Caco-2 (cell line): ENCODE measurements at regions of chr5 and their contacts with region 1.

Region 1: DNA sequence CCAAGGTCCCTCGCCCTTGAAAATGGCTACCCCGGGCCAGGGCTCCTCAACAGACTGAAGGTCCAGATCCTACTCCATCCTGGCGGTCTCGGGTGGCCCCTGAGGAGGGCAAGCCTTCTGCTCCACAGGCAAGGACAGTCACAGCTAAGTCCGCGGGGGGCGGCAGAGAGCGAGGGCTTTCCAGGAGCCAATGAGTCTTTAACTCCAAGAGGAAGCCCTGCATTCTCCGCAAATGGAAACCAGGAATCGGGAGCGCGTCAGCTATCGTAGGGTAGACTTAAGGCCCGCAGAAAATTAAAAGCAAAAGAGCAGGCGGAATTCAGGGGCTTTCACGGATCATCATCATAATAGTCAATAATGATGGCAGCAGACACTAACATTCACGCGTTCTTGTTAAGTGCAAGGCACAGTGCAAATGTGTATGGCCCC is 87.8 kb upstream of the TNFAIP8 start:
- DNase-seq: peak; percentile 91 to 92
- H3K4me3 ChIP-seq: peak overlapping the region; percentile 68
- H3K4me3 Mint-ChIP-seq: peak overlapping the region; percentile 87
- H3K27ac Mint-ChIP-seq: peak overlapping the region; percentile 74
- H3K4me1 ChIP-seq: peaks cover under 1% of the 10 kb centered on the region
- H3K4me1 Mint-ChIP-seq: peaks cover 8% of the 10 kb centered on the region
- H3K27me3 ChIP-seq: no peaks in the 10 kb centered on the region
- H3K27me3 Mint-ChIP-seq: no peaks in the 10 kb centered on the region
- CTCF ChIP-seq: peak in 1 of 2 experiments; percentile 51

Region 2: GRCh38 chr5:119070828-119071572 is 197.0 kb before region 1 on chr5 and contains the start of gene DMXL1:
- CTCF ChIA-PET with region 1: interaction called, 3 read pairs
- POLR2A ChIA-PET with region 1: interaction called, 15 read pairs
- intact Hi-C with region 1: loop called (anchors 1 kb)
- DNase-seq: peak; percentile 99 to 100
- H3K4me3 ChIP-seq: peak within 1 kb of the TSS; percentile 86
- H3K4me3 Mint-ChIP-seq: peak within 1 kb of the TSS; percentile 86
- H3K27ac Mint-ChIP-seq: peak within 1 kb of the TSS; percentile 96
- H3K4me1 ChIP-seq: no peaks in the 10 kb centered on the region
- H3K4me1 Mint-ChIP-seq: peaks cover 6% of the 10 kb centered on the region
- H3K27me3 ChIP-seq: no peaks in the 10 kb centered on the region
- H3K27me3 Mint-ChIP-seq: no peaks in the 10 kb centered on the region
- CTCF ChIP-seq: no peak
- total RNA-seq, gene DMXL1: 30.0 and 33.1 TPM in 2 replicates

Region 3: DNA sequence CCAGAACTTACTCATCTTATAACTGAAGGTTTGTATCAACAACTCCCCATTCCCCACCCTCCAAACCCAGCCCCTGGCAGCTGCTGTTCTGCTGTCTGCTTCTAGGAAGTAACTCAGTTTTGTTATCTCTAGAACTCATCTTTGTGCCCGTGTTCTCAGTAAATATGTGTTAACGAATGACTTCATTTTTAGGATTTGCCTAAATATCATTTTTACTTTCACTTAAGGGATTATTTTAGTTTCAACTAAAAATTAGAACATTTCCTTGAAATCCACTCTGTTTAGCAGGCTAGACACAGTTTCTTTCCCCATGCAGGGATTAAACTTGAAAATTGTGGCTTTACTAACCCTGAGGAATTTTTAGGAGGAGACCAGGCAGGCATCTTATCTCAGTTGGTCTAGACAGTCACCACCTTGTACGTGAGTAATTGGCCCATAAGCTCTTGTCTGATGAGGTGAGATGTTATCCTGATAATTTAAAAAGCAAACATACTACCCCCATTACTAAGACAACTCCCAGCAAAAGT is 19.6 kb after region 1 on chr5:
- CTCF ChIA-PET with region 1: no interaction called
- POLR2A ChIA-PET with region 1: interaction called, 6 read pairs
- intact Hi-C with region 1: loop called (anchors 1 kb)
- DNase-seq: no peak
- H3K4me3 ChIP-seq: no peak overlapping the region
- H3K4me3 Mint-ChIP-seq: peak overlapping the region; percentile 45
- H3K27ac Mint-ChIP-seq: peak overlapping the region; percentile 13
- H3K4me1 ChIP-seq: peaks cover 49% of the 10 kb centered on the region
- H3K4me1 Mint-ChIP-seq: peaks cover 42% of the 10 kb centered on the region
- H3K27me3 ChIP-seq: no peaks in the 10 kb centered on the region
- H3K27me3 Mint-ChIP-seq: no peaks in the 10 kb centered on the region
- CTCF ChIP-seq: no peak

Region 4: DNA sequence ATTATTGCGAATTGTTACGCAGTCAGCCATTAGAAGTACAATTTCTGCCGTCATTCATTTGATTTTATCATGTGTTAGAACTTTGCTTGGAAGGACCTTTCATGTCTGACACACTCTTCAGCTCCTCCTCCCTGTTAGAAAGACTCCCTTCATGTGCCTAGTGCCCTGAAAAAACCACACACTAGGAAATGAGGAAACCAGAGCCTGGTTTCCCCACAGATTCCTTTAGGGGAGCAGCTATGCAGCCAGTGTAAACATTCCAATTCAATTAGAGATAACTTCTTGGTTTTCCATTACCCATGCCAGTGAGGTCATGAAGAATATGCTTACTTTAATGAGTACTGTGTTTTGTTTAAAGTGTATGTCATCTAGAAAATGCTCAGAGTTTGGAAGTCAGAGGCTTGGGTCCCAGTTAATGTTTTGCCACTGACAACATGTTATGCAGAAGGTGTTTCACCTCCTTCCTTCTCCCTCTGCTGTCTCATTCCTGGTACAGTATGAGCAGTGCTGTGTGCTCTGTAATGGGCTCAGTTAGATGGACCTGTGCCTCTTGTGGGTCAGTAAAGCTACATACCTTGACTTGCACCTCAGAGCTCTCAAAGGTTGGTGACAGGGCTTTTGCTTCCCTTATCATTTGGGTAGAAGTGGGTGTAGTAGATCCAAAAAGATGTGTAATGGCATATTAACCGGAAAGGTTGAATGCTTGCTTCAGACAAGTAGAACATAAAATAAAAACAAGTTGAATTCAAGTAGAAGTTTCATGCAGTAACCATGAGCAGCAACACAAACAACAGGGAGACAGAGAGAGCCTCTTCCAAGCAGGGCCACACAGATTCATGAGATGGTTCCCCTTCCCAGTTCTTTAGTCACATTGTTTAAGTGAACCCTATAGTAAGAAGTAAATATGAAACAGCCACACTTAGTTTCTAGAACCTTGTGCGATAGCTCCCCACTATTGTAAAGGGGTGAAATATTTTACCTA is 35.2 kb after region 1 on chr5:
- CTCF ChIA-PET with region 1: interaction called, 8 read pairs
- POLR2A ChIA-PET with region 1: interaction called, 7 read pairs
- intact Hi-C with region 1: loop called (anchors 1 kb)
- DNase-seq: peak; percentile 68 to 76
- H3K4me3 ChIP-seq: no peak overlapping the region
- H3K4me3 Mint-ChIP-seq: peak overlapping the region; percentile 45
- H3K27ac Mint-ChIP-seq: peak overlapping the region; percentile 85
- H3K4me1 ChIP-seq: peaks cover 31% of the 10 kb centered on the region
- H3K4me1 Mint-ChIP-seq: peaks cover 31% of the 10 kb centered on the region
- H3K27me3 ChIP-seq: no peaks in the 10 kb centered on the region
- H3K27me3 Mint-ChIP-seq: no peaks in the 10 kb centered on the region
- CTCF ChIP-seq: peak; percentile 16 to 21

Region 5: GRCh38 chr5:119335261-119335677 is 67.3 kb after region 1 on chr5:
- CTCF ChIA-PET with region 1: interaction called, 8 read pairs
- POLR2A ChIA-PET with region 1: interaction called, 3 read pairs
- intact Hi-C with region 1: loop called (anchors 1 kb)
- DNase-seq: no peak
- H3K4me3 ChIP-seq: no peak overlapping the region
- H3K4me3 Mint-ChIP-seq: no peak overlapping the region
- H3K27ac Mint-ChIP-seq: no peak overlapping the region
- H3K4me1 ChIP-seq: peaks cover 7% of the 10 kb centered on the region
- H3K4me1 Mint-ChIP-seq: peaks cover 17% of the 10 kb centered on the region
- H3K27me3 ChIP-seq: no peaks in the 10 kb centered on the region
- H3K27me3 Mint-ChIP-seq: no peaks in the 10 kb centered on the region
- CTCF ChIP-seq: no peak

Region 6: DNA sequence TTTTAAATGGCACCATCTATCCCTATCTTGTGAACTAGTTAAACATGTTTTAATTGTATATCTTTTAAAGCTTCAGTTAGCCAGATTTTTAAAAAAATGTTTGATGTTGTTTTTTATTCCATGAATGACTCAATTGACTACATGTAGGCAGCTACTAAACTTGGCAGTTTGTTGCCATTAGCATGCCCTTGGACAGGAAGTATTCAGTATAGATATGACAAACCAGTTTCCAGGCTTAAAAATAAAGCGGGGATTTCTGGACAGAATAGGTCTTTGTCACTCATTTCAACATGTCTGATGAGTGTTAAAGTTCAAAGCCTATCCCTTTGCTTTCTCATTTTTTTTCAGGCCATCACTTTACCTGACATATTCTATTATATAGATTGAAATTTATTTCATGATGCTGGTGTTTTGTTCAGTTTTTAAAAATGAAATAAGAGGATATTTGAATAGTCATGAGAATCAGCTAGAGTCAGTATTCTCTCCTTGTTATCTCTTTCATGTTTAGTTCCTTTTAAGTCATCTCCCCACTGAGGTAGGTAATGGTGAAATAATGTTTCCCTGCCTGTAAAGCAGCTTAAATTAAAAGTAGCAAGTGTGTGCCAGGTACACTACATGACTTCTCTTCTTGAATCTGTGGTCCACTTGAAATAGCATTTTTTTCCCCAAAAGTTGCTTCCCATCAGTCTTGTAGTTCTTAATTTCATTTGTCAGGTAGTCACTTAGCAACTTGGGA is 99.7 kb after region 1 on chr5:
- CTCF ChIA-PET with region 1: no interaction called
- POLR2A ChIA-PET with region 1: no interaction called
- intact Hi-C with region 1: no loop called
- DNase-seq: no peak
- H3K4me3 ChIP-seq: no peak overlapping the region
- H3K4me3 Mint-ChIP-seq: no peak overlapping the region
- H3K27ac Mint-ChIP-seq: no peak overlapping the region
- H3K4me1 ChIP-seq: no peaks in the 10 kb centered on the region
- H3K4me1 Mint-ChIP-seq: no peaks in the 10 kb centered on the region
- H3K27me3 ChIP-seq: no peaks in the 10 kb centered on the region
- H3K27me3 Mint-ChIP-seq: no peaks in the 10 kb centered on the region
- CTCF ChIP-seq: no peak